ENCODE measurements at regions of chr3 and their contacts with region 1.

Region 1: DNA sequence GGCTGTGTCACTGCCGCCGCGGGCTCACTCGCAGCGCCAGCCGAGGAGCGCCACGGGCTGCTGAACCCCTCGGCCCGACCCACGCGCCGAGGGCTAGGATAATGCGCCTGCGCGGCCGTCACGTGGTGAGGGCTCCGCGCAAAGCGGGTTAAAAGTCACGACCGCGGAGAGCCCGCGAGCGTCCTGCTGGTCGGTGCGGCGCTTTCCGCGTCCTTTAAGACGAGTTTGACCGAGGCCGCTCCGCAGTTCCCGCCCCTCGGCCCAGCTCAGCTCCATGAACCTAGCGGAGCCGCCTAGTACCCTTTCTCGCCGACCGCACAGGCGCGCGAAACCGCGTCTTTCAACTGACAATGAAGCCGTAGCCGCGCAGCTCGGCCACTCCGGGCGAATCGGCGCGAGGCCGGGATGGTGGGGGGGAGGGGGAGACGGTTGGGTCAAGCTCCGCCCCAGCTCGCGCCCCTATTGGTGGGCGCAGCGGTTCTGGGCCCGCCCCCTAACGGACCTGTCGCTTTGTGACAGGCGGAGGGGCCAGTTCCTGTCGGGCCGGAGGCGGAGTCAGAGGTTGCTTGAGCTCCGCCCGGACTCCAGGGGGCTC is 636 bp upstream of the STT3B start:
- DNase-seq: peak; percentile 100
- ATAC-seq: peak; percentile 98

Region 2: DNA sequence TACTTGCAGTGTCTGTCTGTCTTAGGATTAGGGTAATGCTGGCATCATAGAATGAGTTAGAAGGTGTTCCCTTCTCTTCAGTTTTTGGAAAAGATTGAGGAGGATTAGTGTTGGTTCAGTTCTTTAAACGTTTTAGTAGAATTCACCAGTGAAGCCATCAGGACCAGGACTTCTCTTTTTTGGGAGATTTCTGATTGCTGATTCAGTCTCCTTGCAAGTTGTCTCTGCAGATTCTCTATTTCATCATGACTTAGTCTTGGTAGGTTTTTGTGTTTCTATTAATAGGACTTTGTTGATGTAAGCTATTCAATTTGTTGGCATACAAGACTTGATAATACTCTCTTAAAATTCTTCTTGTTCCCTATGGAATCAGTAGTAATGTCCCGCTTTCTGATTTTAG is 49.6 kb after region 1 on chr3:
- intact Hi-C with region 1: loop called (anchors 2 kb)
- DNase-seq: no peak
- ATAC-seq: no peak

Region 3: DNA sequence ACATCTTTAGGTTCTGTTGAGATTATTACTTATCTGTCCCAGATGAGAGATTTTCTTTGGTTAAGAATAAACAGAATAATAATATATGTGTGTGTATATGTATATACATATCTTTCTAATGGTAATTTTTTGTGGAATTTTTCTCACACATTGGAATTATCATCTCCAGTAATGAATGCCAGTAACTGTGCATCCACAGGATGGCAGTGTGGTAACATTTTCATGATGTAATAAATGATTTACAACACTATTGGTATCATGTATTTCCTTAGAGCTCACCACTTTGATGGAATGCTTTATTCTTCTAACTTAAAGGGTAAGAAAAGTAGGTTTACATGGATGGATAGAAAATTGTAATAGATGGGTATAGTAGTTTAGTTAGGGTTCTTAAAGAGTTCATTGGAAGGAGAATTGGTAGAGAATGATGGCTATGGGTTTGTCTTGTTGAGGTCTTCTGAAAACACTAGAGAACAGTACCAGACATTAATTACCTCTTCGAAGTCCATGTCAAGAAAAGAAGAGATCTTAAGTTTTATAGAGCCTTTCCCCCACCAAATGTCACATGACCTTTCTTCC is 78.7 kb after region 1 on chr3:
- intact Hi-C with region 1: loop called (anchors 5 kb)
- DNase-seq: no peak
- ATAC-seq: no peak

Region 4: DNA sequence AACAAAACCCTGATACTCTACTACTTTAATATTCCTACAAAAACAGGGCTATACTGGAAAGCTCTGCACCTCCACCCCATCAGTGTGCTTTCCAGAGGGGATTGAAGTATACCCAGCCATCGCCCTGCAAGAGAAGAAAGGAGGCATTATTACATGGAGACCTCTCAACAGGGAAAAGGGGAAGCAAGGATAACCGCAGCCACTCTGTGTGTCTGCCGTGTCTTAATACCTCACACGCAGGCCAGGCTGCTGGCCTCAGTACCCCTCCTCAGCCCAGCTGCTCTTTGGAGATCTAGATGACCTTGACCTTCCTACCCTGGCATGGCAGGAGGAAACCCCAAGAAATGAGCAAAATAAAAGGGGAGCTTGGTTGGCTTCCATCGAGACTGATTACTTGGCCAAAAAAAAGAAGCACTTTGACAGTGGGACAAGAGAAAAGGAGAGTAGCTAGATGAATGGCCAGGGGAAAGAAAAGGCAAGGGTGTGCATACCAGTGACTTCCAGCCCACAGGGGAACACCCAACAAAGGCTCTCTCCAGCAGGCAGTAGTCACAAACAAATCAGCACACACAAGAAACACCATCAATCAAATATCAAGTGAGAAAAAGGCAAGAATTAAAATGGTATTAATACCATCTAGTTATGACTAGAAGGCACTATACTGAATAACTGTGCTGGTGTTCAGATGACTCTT is 130.1 kb after region 1 on chr3:
- intact Hi-C with region 1: no loop called
- DNase-seq: no peak
- ATAC-seq: no peak

Region 5: DNA sequence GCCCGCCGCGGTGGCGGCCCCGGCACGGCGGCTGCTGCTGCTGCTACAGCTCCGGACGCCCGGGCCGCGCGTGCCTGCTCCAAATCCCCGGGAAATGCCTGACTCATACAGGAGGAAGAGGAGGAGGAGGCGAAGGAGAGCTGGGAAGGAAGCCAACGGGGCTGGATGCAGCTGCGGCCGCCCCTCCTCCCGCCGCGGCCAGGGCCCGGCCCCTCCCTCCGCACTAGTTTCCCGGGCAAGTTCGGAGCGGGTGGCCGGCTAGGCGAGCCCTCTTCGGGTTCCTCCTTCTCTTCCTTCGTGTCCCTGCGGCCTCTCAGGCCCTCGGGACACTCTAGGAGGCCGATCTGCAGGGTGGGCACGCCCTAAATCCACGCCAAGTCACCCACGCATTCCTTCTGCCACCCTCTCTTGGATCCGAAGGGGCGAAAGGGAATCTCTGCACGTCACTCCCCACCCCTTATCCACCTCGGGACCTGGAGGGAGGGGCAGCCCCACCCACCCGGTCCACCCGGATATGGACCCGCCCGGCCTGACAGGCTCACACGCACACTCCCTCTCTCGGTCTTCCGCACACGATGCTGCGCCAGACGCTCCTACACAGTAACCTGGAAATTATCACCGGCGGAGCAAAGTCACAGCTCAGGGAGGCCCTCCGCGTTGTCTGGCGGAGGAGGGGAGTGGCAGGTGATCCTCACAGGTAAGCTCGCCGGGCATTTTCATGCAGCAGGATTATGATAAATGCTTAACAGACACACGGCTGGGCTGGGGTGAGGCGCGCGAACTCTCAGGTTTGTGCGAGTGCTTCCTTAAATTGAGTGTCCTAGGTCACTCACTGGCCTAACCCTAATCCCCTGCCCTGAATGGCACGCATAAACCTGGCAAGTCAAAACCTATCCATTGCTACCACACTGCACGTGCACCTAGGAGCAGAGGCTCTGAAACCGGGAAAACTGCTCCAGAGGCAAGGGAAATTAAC is 449.4 kb after region 1 on chr3 and contains the starts of genes OSBPL10 and ZNF860:
- intact Hi-C with region 1: loop called (anchors 10 kb)
- DNase-seq: peak; percentile 93
- ATAC-seq: peak; percentile 94
- total RNA-seq, gene OSBPL10: 6.6 TPM
- total RNA-seq, gene ZNF860: 0.27 TPM

Measured in Right ventricle myocardium inferior (tissue), 1 donor.